ENCODE measurements at regions of chr15 and their contacts with region 1.

Region 1: DNA sequence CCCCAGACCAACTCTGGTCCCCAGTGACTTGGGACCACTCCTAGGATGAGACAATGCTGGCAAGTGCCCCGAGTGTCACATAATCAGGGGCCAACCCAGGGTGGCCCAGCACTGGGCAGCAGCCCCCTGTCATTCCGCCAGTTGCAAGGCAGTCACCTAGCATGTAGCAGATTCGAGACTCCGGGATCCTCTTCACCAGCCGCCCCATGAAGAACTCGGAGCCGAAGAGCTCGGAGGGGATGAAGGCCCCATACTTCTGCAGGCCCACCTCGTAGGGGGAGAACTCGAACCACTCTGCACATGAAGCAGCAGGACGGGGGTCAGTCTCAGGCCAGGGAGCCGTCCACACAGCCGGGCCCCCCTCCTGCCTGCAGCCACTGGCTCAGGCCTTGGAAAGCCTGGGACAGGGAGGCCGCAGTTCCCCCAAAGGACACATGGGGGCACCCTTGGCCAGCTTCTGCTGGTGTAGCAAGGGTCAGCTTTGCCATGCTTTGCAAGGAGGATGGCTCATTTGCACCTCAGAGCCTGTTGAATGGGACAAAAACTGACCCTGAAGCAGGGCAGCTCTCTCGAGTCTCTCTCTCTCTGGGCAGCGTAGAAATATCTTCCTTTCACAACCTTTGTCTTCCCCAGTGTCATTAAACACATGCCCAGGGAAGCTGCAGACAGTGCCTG is 17.0 kb upstream of the EHD4 start:
- DNase-seq: peak; percentile 78

Region 2: GRCh38 chr15:41561777-41562145 is 427.6 kb before region 1 on chr15:
- CTCF ChIA-PET with region 1: no interaction called
- POLR2A ChIA-PET with region 1: no interaction called
- DNase-seq: no peak

Region 3: GRCh38 chr15:42056934-42057779 is 67.8 kb after region 1 on chr15:
- CTCF ChIA-PET with region 1: interaction called, 10 read pairs
- POLR2A ChIA-PET with region 1: no interaction called
- DNase-seq: peak; percentile 70